ENCODE measurements at regions of chr4 and their contacts with region 1.

Region 1: GRCh38 chr4:147866532-147867271 is 134.8 kb downstream of the ARHGAP10 start:
- DNase-seq: peak; percentile 66
- ATAC-seq: peak; percentile 94
- H3K4me3 ChIP-seq: no peak overlapping the region
- H3K27ac ChIP-seq: no peak overlapping the region
- H3K4me1 ChIP-seq: 0 out of 2 replicates have a peak, but pooled peaks cover 2% of the 10 kb centered on the region
- H3K27me3 ChIP-seq: no peaks in the 10 kb centered on the region
- CTCF ChIP-seq: peak; percentile 92 to 100 (median 99); a peak in 5 of 6 replicates
- EP300 ChIP-seq: no peak
- POLR2A ChIP-seq: no peak
- RAD21 ChIP-seq: peak; percentile 100

Region 2: DNA sequence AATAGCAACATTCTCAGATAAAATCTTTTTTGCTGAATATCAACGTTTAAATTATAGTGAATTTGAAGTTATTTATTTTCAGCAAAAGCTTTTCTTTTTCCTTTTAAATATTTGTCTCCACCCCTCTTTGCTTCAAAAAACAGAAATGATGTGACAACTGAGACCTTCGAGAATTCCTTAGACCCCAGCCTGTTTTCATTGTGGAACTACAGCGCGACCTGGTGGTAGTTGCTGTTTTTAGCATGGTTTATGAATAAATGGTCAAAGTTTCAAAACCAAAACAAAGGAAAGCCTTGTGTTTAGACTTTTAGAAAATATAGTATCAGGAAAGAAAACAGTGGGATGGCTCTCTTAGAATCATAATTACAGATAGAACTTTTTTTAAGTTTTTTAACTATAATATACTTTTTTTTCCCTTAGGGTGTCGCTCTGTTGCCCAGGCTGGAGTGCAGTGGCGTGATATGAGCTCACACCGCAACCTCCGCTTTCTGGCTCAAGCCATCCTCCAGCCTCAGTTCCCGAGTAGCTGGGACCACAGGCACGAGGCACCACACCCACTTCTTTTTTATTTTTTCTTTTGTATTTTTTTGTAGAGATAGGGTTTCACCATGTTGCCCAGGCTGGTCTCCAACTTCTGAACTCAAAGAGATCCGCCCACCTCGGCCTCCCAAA is 276.3 kb before region 1 on chr4:
- CTCF ChIA-PET with region 1: interaction called, 105 read pairs
- POLR2A ChIA-PET with region 1: no interaction called
- RAD21 ChIA-PET with region 1: interaction called, 85 read pairs
- SMC1A ChIA-PET with region 1: interaction called, 37 read pairs
- in situ Hi-C with region 1: no loop called
- intact Hi-C with region 1: no loop called
- DNase-seq: no peak
- ATAC-seq: peak; percentile 80
- H3K4me3 ChIP-seq: no peak overlapping the region
- H3K27ac ChIP-seq: no peak overlapping the region
- H3K4me1 ChIP-seq: peaks cover 7% of the 10 kb centered on the region; the same call in 1 of the 2 replicates
- H3K27me3 ChIP-seq: no peaks in the 10 kb centered on the region
- CTCF ChIP-seq: peak; percentile 68 to 78 (median 77)
- EP300 ChIP-seq: no peak
- POLR2A ChIP-seq: no peak
- RAD21 ChIP-seq: peak; percentile 100

Region 3: DNA sequence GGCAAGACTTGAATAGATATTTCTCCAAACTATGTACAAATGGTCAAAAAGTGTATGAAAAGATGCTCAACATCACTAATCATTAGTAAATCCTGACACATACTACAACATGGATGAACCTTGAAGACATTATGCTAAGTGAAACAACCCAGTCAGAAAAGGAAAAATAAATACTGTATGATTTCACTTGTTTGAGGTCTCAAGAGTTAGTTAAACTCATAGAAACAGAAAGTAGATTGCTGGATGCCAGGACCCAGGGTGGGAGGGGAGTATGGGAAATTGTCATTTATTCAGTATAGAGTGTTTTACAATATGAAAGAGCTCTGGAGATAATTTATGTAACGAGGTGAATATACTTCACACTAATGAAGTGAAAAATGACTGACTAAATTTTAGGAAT is 215.1 kb before region 1 on chr4:
- CTCF ChIA-PET with region 1: interaction called, 11 read pairs
- POLR2A ChIA-PET with region 1: no interaction called
- RAD21 ChIA-PET with region 1: interaction called, 6 read pairs
- SMC1A ChIA-PET with region 1: interaction called, 8 read pairs
- in situ Hi-C with region 1: no loop called
- intact Hi-C with region 1: no loop called
- DNase-seq: no peak
- ATAC-seq: peak; percentile 69
- H3K4me3 ChIP-seq: no peak overlapping the region
- H3K27ac ChIP-seq: no peak overlapping the region
- H3K4me1 ChIP-seq: peaks cover 4% of the 10 kb centered on the region; the same call in 1 of the 2 replicates
- H3K27me3 ChIP-seq: no peaks in the 10 kb centered on the region
- CTCF ChIP-seq: no peak
- EP300 ChIP-seq: no peak
- POLR2A ChIP-seq: no peak
- RAD21 ChIP-seq: no peak

Region 4: DNA sequence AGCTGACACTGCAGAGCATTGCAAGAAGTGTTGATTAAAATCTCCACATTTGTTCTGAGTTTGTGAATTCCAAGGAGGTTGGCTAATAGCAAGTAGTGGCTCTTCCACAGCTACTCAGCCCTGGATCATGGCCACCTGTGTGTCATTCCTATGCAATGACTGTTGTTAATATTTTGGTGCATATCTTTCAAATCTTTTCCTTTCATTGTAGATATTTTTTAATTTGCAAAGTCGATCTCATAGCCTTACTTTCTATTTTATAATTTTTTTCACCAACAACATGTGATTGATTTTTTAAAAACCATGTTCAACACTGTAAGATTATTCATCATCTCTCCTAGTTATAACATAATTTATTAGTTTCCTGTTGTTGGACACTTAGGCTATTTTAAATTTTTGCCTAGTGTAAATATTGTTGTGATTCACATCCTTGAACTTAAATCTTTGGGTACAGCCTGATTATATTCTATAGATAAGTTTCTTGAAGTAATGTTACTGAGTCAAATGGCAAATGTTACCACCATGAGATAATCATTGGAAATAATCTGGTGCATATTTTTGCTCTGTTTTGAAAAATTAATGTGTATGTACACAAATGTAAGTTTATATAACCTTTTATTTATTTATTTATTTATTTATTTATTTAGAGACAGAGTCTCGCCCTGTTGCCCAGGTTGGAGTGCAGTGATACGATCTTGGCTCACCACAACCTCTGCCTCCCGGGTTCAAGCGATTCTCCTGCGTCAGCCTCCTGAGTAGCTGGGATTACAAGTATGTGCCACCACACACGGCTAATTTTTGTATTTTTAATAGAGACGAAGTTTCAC is 151.9 kb before region 1 on chr4:
- CTCF ChIA-PET with region 1: interaction called, 343 read pairs
- POLR2A ChIA-PET with region 1: interaction called, 5 read pairs
- RAD21 ChIA-PET with region 1: interaction called, 129 read pairs
- SMC1A ChIA-PET with region 1: interaction called, 251 read pairs
- in situ Hi-C with region 1: loop called (anchors 5 kb)
- intact Hi-C with region 1: no loop called
- DNase-seq: no peak
- ATAC-seq: no peak
- H3K4me3 ChIP-seq: no peak overlapping the region
- H3K27ac ChIP-seq: no peak overlapping the region
- H3K4me1 ChIP-seq: peaks cover 18% of the 10 kb centered on the region
- H3K27me3 ChIP-seq: no peaks in the 10 kb centered on the region
- CTCF ChIP-seq: no peak
- EP300 ChIP-seq: no peak
- POLR2A ChIP-seq: no peak
- RAD21 ChIP-seq: no peak

Region 5: DNA sequence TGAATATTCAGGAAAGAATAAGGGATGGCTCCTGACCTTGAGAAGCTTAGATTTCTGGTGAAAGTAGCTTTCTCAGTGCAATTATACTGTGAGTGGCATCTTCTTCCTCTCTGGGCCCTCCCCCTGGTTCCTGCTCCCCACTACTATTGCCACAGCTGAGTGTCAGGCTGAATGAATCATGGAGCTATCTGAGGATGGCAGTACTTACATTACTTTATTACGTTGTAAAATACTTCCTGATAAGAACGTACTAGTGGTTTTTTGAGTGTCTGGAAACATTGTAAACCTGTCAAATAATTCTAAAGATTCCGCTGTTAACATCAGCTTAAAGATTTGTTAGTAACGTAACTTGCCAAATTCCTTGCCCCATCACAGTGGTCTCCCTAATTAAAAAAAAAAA is 98.6 kb before region 1 on chr4:
- CTCF ChIA-PET with region 1: interaction called, 24 read pairs
- POLR2A ChIA-PET with region 1: no interaction called
- RAD21 ChIA-PET with region 1: interaction called, 6 read pairs
- SMC1A ChIA-PET with region 1: interaction called, 12 read pairs
- in situ Hi-C with region 1: no loop called
- intact Hi-C with region 1: no loop called
- DNase-seq: no peak
- ATAC-seq: peak; percentile 48; the same call in 2 of the 3 replicates
- H3K4me3 ChIP-seq: no peak overlapping the region
- H3K27ac ChIP-seq: no peak overlapping the region
- H3K4me1 ChIP-seq: peaks cover 11% of the 10 kb centered on the region
- H3K27me3 ChIP-seq: no peaks in the 10 kb centered on the region
- CTCF ChIP-seq: no peak
- EP300 ChIP-seq: no peak
- POLR2A ChIP-seq: no peak
- RAD21 ChIP-seq: no peak

Region 6: DNA sequence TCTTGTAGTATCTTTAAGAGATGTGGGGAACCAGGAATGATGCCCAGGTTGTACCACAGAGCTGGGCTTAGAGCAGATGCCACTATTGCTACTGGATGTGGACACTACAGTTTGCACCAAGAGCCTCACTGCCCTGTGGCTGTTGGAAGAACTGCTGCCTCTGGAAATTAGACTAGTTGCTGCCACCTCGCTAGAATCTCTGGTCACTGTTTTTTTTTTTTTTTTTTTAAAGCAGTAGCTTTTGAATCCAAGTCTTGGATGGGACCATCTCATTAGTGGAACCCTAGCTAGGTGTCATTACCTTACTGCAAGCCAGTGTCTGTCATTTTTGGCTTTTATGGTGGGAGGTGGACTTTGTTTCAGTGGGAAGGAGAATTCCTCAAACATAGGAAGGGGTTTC is 29.3 kb before region 1 on chr4:
- CTCF ChIA-PET with region 1: interaction called, 197 read pairs
- POLR2A ChIA-PET with region 1: no interaction called
- RAD21 ChIA-PET with region 1: interaction called, 100 read pairs
- SMC1A ChIA-PET with region 1: interaction called, 87 read pairs
- in situ Hi-C with region 1: no loop called
- intact Hi-C with region 1: no loop called
- DNase-seq: no peak
- ATAC-seq: peak; percentile 86
- H3K4me3 ChIP-seq: peak overlapping the region; percentile 46; the same call in 1 of the 2 replicates
- H3K27ac ChIP-seq: peak overlapping the region; percentile 65
- H3K4me1 ChIP-seq: peaks cover 21% of the 10 kb centered on the region; the same call in 1 of the 2 replicates
- H3K27me3 ChIP-seq: no peaks in the 10 kb centered on the region
- CTCF ChIP-seq: peak; percentile 7 to 41 (median 34); a peak in 3 of 6 replicates
- EP300 ChIP-seq: no peak
- POLR2A ChIP-seq: no peak
- RAD21 ChIP-seq: 0 out of 2 replicates have a peak, but pooled peaks have one; percentile 3

Region 7: DNA sequence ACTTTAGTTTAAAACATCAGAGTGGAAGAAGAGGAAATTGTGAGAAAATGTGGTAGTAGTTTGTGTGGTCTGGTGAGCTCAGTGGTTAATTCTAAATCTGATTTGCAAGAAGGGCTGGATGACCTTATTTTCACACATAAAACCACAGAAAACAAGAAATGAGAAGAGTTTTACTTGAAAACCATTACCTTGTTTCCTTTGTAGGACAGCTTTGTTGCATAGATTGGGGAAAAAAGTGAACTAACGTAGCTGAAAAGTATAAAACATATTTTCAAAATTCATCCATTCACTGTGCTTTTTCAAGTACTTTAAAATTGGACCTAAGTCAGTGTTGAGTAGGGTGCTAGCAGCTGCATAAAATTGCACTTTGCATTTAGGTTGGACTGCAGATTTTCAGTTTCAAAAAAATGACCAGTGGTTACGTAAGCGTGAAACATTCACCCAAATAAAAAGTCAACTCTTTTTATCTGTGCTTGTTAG is 76.5 kb after region 1 on chr4:
- CTCF ChIA-PET with region 1: interaction called, 10 read pairs
- POLR2A ChIA-PET with region 1: no interaction called
- RAD21 ChIA-PET with region 1: no interaction called
- SMC1A ChIA-PET with region 1: interaction called, 3 read pairs
- in situ Hi-C with region 1: no loop called
- intact Hi-C with region 1: no loop called
- DNase-seq: peak; percentile 62
- ATAC-seq: peak; percentile 93
- H3K4me3 ChIP-seq: peak overlapping the region; percentile 13; the same call in 1 of the 2 replicates
- H3K27ac ChIP-seq: peak overlapping the region; percentile 59
- H3K4me1 ChIP-seq: peaks cover 21% of the 10 kb centered on the region
- H3K27me3 ChIP-seq: no peaks in the 10 kb centered on the region
- CTCF ChIP-seq: no peak
- EP300 ChIP-seq: peak; percentile 81 to 88
- POLR2A ChIP-seq: no peak
- RAD21 ChIP-seq: no peak

Measured in GM12878 (cell line).